GM18951 (cell line): ENCODE measurements at regions of chr13 and their contacts with region 1.

Region 1: GRCh38 chr13:112638157-112638750 is 50.3 kb upstream of the TUBGCP3 start:
- POLR2A ChIP-seq: no peak

Region 2: GRCh38 chr13:112873851-112874750 is 235.8 kb after region 1 on chr13:
- in situ Hi-C with region 1: loop called (anchors 25 kb)
- POLR2A ChIP-seq: no peak